ENCODE measurements at regions of chr20 and their contacts with region 1.

Region 1: DNA sequence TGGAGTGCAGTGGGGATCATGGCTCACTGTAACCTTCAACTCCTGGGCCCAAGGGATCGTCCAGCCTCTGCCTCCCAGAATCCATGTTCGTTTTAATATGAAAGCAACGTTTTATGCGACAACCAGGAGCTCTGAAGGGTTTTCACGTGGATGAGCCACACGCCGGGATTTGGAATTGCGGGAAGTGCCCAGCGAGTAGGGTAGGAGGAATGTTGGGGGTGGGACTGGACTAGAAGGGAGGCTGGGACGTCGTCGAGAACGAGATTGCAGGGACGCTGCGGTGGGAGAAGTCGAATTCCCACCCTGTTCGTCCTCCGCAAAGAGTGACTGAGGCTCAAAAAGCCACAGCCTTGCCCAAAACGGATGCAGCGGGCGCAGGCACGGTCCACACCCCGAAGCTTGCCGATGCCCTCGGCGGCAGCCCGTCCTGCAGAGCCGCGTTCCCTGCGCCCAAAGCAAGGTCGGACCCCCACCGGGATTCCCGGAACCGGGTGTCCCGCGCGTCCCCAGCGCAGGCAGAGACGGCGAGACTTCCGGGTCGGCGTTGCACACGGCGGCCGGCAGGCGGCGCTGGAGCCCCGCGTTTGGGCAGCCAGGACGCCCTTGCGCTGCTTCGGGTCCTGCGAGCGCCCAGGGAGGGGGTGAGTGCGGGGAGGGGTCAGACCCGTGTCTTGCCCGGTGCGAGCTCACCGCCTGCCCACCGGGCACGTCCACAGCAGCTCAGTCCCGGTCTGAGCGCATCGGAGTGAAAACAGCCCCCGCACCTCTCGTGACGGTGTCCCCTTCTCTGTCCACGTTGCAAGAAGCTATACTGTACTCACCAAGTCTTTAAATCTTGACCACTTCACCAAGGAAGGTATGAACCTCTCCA is 87.8 kb downstream of the DHX35 start:
- DNase-seq: peak; percentile 92
- H3K4me3 ChIP-seq: peak overlapping the region; percentile 60 to 70
- H3K27ac ChIP-seq: peak overlapping the region in 1 of 2 experiments; percentile 53; a peak in 1 of 4 replicates
- H3K4me1 ChIP-seq: peaks cover 0 to 4% of the 10 kb centered on the region in 2 experiments; a peak in 1 of 4 replicates
- H3K27me3 ChIP-seq: no peaks in the 10 kb centered on the region; the same call in 1 of the 2 replicates
- CTCF ChIP-seq: peak; percentile 87
- EP300 ChIP-seq: no peak
- RAD21 ChIP-seq: peak; percentile 84

Region 2: DNA sequence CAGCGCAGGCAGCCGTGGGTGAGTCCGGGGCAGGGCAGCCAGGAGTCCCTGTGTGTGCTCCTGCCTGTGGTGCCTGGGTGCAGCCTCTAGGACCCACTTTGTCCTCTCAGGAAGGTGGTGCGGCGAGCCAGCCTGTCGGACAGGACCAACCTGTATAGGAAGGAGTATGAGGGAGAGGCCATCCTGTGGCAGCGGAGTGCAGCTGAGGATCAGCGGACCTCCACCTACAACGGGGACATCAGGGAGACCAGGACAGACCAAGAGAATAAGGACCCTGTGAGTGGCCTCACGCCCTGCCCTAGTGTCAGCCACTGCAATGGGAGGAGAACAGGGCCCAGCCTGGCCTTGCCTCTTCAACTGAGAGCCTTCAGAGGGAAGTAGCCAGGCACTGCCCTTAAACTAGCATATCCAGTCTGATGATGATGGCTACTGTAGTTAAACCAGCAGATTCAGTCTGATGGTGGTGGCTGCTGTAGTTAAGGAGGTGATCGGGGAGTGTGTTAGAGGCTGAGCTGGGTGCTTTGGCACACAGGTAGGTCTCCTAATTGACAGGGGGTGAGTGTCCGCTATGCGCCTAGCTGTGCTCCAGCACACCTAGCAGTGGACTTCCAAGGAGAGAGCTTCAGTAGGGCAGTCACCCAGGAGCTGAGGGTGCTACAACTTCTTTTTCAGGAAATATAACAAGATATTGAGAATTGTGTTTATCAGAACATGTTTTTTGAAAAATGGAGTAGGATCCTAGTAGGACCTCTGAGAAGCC is 141.8 kb before region 1 on chr20:
- CTCF ChIA-PET with region 1: no interaction called
- POLR2A ChIA-PET with region 1: no interaction called
- DNase-seq: no peak
- H3K4me3 ChIP-seq: no peak overlapping the region
- H3K27ac ChIP-seq: no peak overlapping the region
- H3K4me1 ChIP-seq: no peaks in the 10 kb centered on the region
- H3K27me3 ChIP-seq: no peaks in the 10 kb centered on the region; the same call in 1 of the 2 replicates
- CTCF ChIP-seq: no peak
- EP300 ChIP-seq: no peak
- RAD21 ChIP-seq: no peak

Region 3: DNA sequence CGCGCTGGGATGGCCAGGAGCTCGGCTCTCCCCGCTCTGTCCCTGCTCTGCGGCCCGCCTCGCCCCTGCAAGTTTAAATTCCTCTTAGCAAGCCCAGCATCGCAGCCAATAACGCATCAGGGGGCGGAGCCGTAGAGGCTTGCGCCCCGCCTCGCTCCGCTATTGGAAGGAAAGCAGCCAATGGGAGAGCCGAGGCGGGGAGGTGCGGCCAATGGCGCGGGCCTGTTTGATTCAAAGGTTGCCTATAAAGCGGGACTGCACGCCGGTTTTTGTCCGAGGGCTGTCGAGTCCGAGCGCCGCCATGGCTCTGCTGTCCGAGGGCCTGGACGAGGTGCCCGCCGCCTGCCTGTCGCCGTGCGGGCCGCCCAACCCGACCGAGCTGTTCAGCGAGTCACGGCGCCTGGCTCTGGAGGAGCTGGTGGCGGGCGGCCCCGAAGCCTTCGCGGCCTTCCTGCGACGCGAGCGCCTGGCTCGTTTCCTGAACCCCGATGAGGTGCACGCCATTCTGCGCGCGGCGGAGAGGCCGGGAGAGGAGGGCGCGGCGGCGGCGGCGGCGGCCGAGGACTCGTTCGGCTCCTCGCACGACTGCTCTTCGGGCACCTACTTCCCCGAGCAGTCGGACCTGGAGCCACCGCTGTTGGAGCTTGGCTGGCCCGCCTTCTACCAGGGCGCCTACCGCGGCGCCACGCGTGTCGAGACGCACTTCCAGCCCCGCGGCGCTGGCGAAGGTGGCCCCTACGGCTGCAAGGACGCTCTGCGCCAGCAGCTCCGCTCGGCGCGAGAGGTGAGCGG is 123.6 kb before region 1 on chr20 and contains the start of gene FAM83D:
- CTCF ChIA-PET with region 1: interaction called, 41 read pairs
- POLR2A ChIA-PET with region 1: no interaction called
- DNase-seq: peak; percentile 99
- H3K4me3 ChIP-seq: peak within 1 kb of the TSS; percentile 81 to 91
- H3K27ac ChIP-seq: peak within 1 kb of the TSS; percentile 37 to 54
- H3K4me1 ChIP-seq: peaks cover 0 to 14% of the 10 kb centered on the region in 2 experiments; a peak in 2 of 4 replicates
- H3K27me3 ChIP-seq: peaks cover 6% of the 10 kb centered on the region; the same call in 1 of the 2 replicates
- CTCF ChIP-seq: no peak
- EP300 ChIP-seq: 0 out of 4 replicates have a peak, but pooled peaks of 1 of the 2 experiments have one; percentile 7
- RAD21 ChIP-seq: peak; percentile 70; the same call in 1 of the 2 replicates
- polyA plus RNA-seq, gene FAM83D: 18.9 and 21.5 TPM in 2 replicates

Region 4: GRCh38 chr20:39016041-39016440 is 33.9 kb before region 1 on chr20:
- CTCF ChIA-PET with region 1: interaction called, 24 read pairs
- POLR2A ChIA-PET with region 1: no interaction called
- DNase-seq: no peak
- H3K4me3 ChIP-seq: no peak overlapping the region
- H3K27ac ChIP-seq: no peak overlapping the region
- H3K4me1 ChIP-seq: no peaks in the 10 kb centered on the region
- H3K27me3 ChIP-seq: no peaks in the 10 kb centered on the region
- CTCF ChIP-seq: no peak
- EP300 ChIP-seq: no peak
- RAD21 ChIP-seq: no peak

Region 5: DNA sequence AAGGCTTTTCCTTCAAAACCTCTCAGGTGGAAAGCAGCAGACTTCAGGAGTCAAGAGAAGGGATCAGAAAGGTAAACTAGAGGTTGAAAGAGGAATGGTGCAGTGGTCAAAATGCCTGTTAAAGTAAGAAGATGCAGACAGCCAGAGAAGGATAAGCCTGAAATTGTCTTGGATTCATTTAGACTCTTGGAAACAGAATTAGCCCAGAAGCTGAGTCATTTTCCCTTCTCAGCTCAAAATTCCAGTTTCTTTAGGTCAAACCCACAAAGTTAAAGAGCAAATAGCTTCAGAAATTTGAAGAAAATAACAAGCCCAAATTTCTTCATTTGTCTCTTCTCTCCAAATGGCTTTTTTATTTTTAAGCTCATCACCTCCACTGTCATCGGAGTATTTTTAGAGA is 13.9 kb before region 1 on chr20:
- CTCF ChIA-PET with region 1: interaction called, 84 read pairs
- POLR2A ChIA-PET with region 1: no interaction called
- DNase-seq: no peak
- H3K4me3 ChIP-seq: no peak overlapping the region
- H3K27ac ChIP-seq: peak overlapping the region in 1 of 2 experiments; percentile 10; a peak in 1 of 4 replicates
- H3K4me1 ChIP-seq: peaks cover 0 to 20% of the 10 kb centered on the region in 2 experiments; a peak in 1 of 4 replicates
- H3K27me3 ChIP-seq: no peaks in the 10 kb centered on the region
- CTCF ChIP-seq: no peak
- EP300 ChIP-seq: no peak
- RAD21 ChIP-seq: no peak

Region 6: DNA sequence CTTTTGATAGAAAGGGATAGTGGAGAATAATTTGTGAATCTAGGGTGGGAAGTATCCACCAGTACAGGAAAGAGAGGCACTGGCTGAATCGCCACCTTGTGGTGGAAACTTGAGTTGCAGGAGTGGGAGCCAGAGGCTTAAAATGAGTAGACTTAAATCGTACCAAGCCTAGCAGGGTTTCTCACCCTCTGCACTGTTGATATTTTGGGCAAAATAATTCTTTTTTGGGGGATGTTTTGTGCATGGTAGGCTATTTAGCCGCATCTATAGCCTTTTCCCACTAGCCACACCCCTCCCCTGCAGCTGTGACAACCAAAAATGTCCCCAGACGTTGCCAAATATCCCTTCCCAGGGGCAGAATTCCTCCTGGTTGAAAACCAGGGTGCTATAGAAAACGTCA is 31.3 kb after region 1 on chr20:
- CTCF ChIA-PET with region 1: interaction called, 444 read pairs
- POLR2A ChIA-PET with region 1: interaction called, 5 read pairs
- DNase-seq: peak; percentile 85
- H3K4me3 ChIP-seq: no peak overlapping the region; a peak in 1 of 4 replicates
- H3K27ac ChIP-seq: no peak overlapping the region
- H3K4me1 ChIP-seq: no peaks in the 10 kb centered on the region
- H3K27me3 ChIP-seq: peaks cover 11% of the 10 kb centered on the region; the same call in 1 of the 2 replicates
- CTCF ChIP-seq: peak; percentile 88
- EP300 ChIP-seq: no peak
- RAD21 ChIP-seq: peak; percentile 73